Activated naive CD4-positive, alpha-beta T cell treated with anti-CD3 and anti-CD28 coated beads for 36 hours (primary cell): ENCODE measurements at regions of chr10 and their contacts with region 1.

Region 1: GRCh38 chr10:113678690-113679462 is 836 bp upstream of the CASP7 start:
- DNase-seq: peak; percentile 84
- H3K4me3 Mint-ChIP-seq: peak overlapping the region; percentile 83
- H3K27ac Mint-ChIP-seq: peak overlapping the region; percentile 68
- H3K4me1 Mint-ChIP-seq: peaks cover 39% of the 10 kb centered on the region
- H3K27me3 Mint-ChIP-seq: peaks cover 3% of the 10 kb centered on the region

Region 2: GRCh38 chr10:112389147-112389822 is 1289.6 kb before region 1 on chr10:
- CTCF ChIA-PET with region 1: no interaction called
- intact Hi-C with region 1: loop called (anchors 5 kb)
- DNase-seq: peak; percentile 90
- H3K4me3 Mint-ChIP-seq: peak overlapping the region; percentile 32
- H3K27ac Mint-ChIP-seq: peak overlapping the region; percentile 85
- H3K4me1 Mint-ChIP-seq: peaks cover 70% of the 10 kb centered on the region
- H3K27me3 Mint-ChIP-seq: no peaks in the 10 kb centered on the region

Region 3: DNA sequence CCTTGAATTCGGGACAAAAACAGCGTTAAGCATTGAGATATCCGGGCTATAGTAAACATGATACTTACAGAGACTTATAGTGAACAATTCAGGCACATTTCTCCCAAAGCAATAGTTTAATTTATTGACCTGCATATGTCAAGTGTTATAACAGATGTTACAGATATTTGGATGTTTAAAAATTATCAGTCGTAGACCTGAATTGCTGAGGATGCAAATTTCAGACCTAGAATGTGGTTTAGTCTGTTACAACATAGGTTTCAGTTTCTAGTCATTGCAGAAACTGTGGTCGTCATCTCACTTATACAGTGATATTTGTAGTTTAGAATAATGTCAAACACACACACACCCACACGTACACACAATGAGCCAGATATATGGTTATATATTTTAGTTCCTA is 1146.7 kb before region 1 on chr10:
- CTCF ChIA-PET with region 1: no interaction called
- intact Hi-C with region 1: loop called (anchors 5 kb)
- DNase-seq: peak; percentile 20
- H3K4me3 Mint-ChIP-seq: no peak overlapping the region
- H3K27ac Mint-ChIP-seq: no peak overlapping the region
- H3K4me1 Mint-ChIP-seq: peaks cover 28% of the 10 kb centered on the region
- H3K27me3 Mint-ChIP-seq: no peaks in the 10 kb centered on the region

Region 4: DNA sequence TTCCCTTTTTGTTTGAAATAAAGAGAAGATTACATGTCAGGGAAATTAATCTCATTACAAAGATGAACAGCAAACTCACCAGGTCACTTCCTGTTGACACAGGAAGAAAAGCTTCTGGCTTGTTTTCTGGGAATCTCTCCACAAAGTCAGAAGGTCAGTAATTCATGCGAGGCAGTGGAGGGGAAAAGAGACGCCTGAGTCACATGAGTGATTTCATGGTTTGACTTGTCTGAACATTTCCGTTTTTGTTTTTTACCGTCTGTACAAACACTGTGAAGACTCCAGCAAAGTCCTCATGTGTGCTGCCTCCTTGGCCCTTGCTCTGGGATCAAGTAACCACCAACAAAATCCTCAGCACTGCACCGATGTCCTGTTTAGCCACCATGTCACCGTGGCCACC is 128.5 kb before region 1 on chr10:
- CTCF ChIA-PET with region 1: no interaction called
- intact Hi-C with region 1: no loop called
- DNase-seq: no peak
- H3K4me3 Mint-ChIP-seq: no peak overlapping the region
- H3K27ac Mint-ChIP-seq: no peak overlapping the region
- H3K4me1 Mint-ChIP-seq: no peaks in the 10 kb centered on the region
- H3K27me3 Mint-ChIP-seq: peaks cover 3% of the 10 kb centered on the region

Region 5: GRCh38 chr10:113854011-113854760 is 175.3 kb after region 1 on chr10 and contains the starts of genes DCLRE1A and NHLRC2:
- CTCF ChIA-PET with region 1: no interaction called
- intact Hi-C with region 1: loop called (anchors 1 kb)
- DNase-seq: peak; percentile 67
- H3K4me3 Mint-ChIP-seq: peak within 1 kb of the TSS; percentile 95
- H3K27ac Mint-ChIP-seq: peak within 1 kb of the TSS; percentile 98
- H3K4me1 Mint-ChIP-seq: peaks cover 35% of the 10 kb centered on the region
- H3K27me3 Mint-ChIP-seq: no peaks in the 10 kb centered on the region
- total RNA-seq, gene DCLRE1A: 8.1 to 8.7 TPM
- total RNA-seq, gene NHLRC2: 12.6 to 13.9 TPM

Region 6: DNA sequence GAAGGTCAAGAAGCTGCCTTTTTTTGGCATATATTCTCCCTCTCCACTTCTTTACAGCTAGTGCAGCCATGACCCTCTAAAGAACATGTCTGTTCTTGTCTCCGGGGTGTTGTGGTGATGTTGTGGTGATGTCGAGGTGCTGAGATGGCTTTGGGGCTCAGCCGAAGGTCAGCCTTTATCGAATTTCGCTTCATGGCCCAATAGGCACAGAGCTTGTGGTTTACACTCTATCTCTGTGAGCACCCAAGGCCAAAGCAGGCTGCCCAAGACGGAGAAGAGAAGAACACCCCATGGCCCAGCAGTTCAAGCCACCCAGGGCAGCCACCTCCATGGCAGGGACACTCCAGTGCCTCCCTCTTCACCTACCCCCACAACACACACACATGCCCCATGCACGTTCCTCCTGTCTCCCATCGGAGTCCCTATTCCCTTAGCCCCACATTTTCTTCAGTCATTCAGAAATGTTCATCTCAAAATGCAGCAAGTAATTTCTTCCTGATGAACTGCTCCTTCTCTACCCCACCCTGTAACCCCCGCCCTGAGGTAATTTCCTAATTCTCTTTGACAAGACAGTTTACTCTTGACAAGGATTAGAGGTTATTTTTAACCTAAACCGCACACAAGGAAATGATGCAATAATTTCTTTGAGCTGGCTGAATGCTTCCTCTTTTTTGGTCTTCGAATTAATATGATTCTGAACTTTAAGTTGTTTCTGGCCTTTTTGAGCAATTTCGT is 346.2 kb after region 1 on chr10:
- CTCF ChIA-PET with region 1: interaction called, 4 read pairs
- intact Hi-C with region 1: loop called (anchors 5 kb)
- DNase-seq: peak; percentile 54
- H3K4me3 Mint-ChIP-seq: peak overlapping the region; percentile 28
- H3K27ac Mint-ChIP-seq: peak overlapping the region; percentile 64
- H3K4me1 Mint-ChIP-seq: peaks cover 30% of the 10 kb centered on the region
- H3K27me3 Mint-ChIP-seq: peaks cover 32% of the 10 kb centered on the region

Region 7: DNA sequence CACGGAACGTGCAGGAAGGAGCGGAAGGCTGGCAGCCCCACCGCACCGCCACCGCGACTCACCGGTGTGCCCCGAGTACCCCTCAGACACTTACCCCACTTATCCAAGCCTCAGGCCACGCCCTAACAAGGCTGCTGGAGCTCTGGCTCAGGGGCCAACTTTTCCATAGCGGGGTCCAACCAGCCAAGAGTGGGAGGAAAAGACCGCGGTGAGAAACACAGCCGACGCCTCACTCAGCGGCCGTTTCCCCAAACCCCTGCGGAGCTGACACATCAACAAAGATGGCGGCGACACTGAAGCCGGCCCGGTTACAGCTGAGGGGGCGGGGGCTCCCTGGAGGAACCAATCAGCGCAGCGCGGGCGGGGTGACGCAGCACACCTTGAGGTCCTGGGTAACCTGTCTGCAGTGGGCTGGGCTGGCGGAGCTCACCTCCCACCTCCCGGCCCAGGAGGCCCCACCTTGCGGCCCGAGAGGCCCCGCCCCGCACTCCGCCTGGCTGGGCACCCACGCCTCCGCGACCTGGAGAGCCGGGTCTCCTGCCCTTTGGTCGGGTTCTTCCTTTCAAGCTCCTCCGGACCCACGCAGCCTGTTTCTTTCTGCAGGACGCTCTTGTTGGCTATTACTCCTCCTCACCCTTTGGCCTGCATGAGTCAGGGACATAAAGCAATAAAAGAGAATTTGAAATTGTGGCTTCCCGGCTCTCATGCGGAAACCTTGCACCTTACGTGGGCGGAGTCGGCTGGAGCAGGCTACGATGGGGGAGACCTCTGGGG is 495.2 kb after region 1 on chr10 and contains the start of gene CCDC186:
- CTCF ChIA-PET with region 1: no interaction called
- intact Hi-C with region 1: loop called (anchors 1 kb)
- DNase-seq: peak; percentile 99
- H3K4me3 Mint-ChIP-seq: peak within 1 kb of the TSS; percentile 98
- H3K27ac Mint-ChIP-seq: peak within 1 kb of the TSS; percentile 93
- H3K4me1 Mint-ChIP-seq: peaks cover 27% of the 10 kb centered on the region
- H3K27me3 Mint-ChIP-seq: no peaks in the 10 kb centered on the region
- total RNA-seq, gene CCDC186: 10.3 to 13.7 TPM

Region 8: DNA sequence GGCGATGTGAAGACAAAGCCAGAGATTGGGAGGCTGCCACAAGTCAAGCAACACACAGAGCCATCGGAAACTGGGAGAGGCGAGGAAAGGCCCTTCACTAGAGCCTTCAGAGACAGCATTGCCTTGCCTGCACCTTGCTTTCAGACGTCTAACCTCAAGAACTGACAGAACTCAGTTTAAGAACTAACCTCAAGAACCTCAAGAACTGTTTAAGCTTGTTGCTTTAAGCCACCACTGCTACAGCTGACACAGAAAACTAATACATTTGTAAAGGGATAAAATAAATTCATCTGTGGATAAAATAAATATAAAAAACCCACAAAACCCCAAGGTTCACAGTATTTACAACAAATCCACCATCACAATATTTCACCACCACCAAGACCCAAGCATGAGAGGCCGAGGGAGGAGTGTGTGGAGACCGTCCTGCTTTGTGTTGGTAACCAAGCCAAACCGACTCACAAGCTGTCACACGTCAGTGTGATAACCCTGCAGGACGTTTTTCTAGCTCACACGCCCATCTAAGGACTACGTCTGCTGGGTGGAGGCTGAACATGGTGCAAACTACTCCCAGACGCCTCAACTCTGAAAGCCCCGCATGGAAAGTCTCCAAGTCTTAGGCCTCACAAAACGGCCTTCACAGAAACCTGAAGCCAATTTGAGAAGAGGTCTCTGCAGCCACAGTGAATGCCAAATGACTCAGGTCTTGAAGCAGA is 862.4 kb after region 1 on chr10:
- CTCF ChIA-PET with region 1: no interaction called
- intact Hi-C with region 1: loop called (anchors 5 kb)
- DNase-seq: peak; percentile 87
- H3K4me3 Mint-ChIP-seq: peak overlapping the region; percentile 69
- H3K27ac Mint-ChIP-seq: peak overlapping the region; percentile 95
- H3K4me1 Mint-ChIP-seq: peaks cover 90% of the 10 kb centered on the region
- H3K27me3 Mint-ChIP-seq: no peaks in the 10 kb centered on the region